ENCODE measurements at regions of chr5 and their contacts with region 1.

Region 1: DNA sequence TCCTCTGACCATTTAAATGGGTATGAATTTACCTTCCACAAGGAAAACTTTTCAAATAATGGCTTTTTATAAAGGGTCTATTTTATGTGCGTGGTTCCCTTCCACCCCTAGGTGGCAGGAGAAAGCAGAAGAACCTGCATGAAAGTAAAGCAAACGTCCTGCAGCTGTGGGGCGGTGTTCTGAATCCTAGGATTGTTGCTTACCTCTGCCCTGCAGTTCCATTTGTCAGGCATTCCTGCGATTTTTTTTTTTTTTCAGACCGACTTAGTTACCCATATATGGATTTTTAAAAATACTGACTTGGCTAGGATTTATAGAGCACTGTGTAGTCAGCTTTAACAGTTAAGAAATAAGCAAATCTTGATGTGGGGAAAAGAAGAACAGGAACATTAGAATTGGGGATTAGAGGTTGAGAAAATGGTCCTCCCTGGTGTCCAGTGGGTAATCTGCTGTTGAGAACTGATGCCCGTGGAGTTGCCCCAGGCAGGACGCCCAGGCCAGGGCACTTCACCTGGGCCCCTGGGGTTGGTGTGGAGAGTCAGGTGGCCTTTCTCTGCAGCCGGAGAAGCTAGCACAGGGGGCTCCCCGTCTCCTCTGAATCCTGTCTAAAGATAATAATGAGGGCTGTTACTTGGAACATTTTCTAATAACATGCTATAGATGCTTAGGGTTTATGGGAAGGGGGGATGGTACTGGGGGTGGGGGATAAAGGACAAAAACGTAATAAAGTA is 30.4 kb upstream of the LTC4S start:
- DNase-seq: no peak
- H3K4me3 ChIP-seq: no peak overlapping the region
- H3K27ac ChIP-seq: peak overlapping the region; percentile 53
- H3K4me1 ChIP-seq: peaks cover 73% of the 10 kb centered on the region
- H3K27me3 ChIP-seq: no peaks in the 10 kb centered on the region
- CTCF ChIP-seq: peak; percentile 51 to 85 (median 77)
- POLR2A ChIP-seq: no peak

Region 2: GRCh38 chr5:179858586-179859427 is 95.4 kb after region 1 on chr5 and contains the start of gene MRNIP:
- intact Hi-C with region 1: loop called (anchors 10 kb)
- DNase-seq: peak in 1 of 2 donors; percentile 95
- H3K4me3 ChIP-seq: peak within 1 kb of the TSS; percentile 95 to 97
- H3K27ac ChIP-seq: peak within 1 kb of the TSS; percentile 96
- H3K4me1 ChIP-seq: peaks cover 36% of the 10 kb centered on the region
- H3K27me3 ChIP-seq: no peaks in the 10 kb centered on the region
- CTCF ChIP-seq: peak in 1 of 3 experiments; percentile 48
- POLR2A ChIP-seq: peak; percentile 31 to 61
- total RNA-seq, gene MRNIP: 53.8 TPM

Region 3: GRCh38 chr5:181217111-181217802 is 1453.9 kb after region 1 on chr5:
- intact Hi-C with region 1: no loop called
- DNase-seq: no peak
- H3K4me3 ChIP-seq: peak overlapping the region; percentile 46 to 65
- H3K27ac ChIP-seq: peak overlapping the region; percentile 62
- H3K4me1 ChIP-seq: peaks cover 22% of the 10 kb centered on the region
- H3K27me3 ChIP-seq: no peaks in the 10 kb centered on the region
- CTCF ChIP-seq: no peak
- POLR2A ChIP-seq: no peak